Ascending aorta (tissue), 2 donors: ENCODE measurements at regions of chr10 and their contacts with region 1.

Region 1: DNA sequence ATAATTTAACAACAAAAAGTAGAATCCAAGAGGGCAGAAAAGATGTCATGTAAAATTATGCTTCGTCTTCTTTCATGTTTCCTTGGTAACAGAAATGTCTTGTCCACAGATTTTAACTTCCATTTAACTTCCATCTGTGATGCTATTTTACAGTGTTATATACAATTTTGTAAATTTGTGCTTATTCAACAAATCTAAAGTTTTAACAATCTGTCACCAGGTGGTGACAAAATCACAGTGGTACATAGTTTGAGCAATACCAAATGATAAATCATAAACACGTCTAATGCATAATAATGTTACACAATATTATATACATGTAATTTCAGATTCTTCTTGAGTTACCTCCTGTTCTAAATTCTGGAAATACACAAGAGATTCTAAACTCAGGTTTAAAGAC is 784.4 kb upstream of the CELF2 start:
- DNase-seq: no peak
- H3K4me3 ChIP-seq: no peak overlapping the region
- H3K27ac ChIP-seq: no peak overlapping the region
- H3K4me1 ChIP-seq: no peaks in the 10 kb centered on the region
- H3K27me3 ChIP-seq: no peaks in the 10 kb centered on the region
- CTCF ChIP-seq: peak in 2 of 3 experiments; percentile 5 to 34

Region 2: DNA sequence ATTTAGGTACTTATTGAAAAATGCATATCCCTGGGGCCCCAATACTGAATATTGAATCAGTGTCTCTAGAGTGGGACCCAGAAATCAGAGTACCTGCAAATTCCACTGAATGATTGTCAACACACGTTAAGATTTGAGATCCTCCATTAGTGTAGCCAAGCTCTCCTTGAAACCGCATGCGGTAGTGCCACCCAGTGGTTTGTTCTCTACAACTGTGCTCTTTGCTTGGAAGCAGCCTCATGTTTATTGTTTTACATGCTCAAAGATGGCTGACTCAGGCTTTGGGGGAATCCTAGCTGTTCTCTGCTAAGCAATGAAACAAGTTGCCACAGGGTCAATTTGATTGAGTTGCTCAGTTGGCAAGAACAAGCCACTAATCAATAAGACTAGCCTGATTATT is 444.2 kb after region 1 on chr10:
- intact Hi-C with region 1: loop called (anchors 5 kb)
- DNase-seq: peak in 1 of 2 donors; percentile 66
- H3K4me3 ChIP-seq: no peak overlapping the region
- H3K27ac ChIP-seq: no peak overlapping the region
- H3K4me1 ChIP-seq: no peaks in the 10 kb centered on the region
- H3K27me3 ChIP-seq: no peaks in the 10 kb centered on the region
- CTCF ChIP-seq: peak; percentile 36 to 59 (median 36)

Region 3: GRCh38 chr10:10930979-10931743 is 697.9 kb after region 1 on chr10:
- intact Hi-C with region 1: loop called (anchors 10 kb)
- DNase-seq: no peak
- H3K4me3 ChIP-seq: no peak overlapping the region
- H3K27ac ChIP-seq: no peak overlapping the region
- H3K4me1 ChIP-seq: no peaks in the 10 kb centered on the region
- H3K27me3 ChIP-seq: no peaks in the 10 kb centered on the region
- CTCF ChIP-seq: no peak